CD4-positive, alpha-beta T cell (primary cell): ENCODE measurements at regions of chr2 and their contacts with region 1.

Region 1: GRCh38 chr2:134918526-134919340 is at the start of gene CCNT2:
- DNase-seq: peak; percentile 98 to 100 (median 99)
- ATAC-seq: peak; percentile 82
- H3K4me3 ChIP-seq: peak within 1 kb of the TSS; percentile 88
- H3K4me3 Mint-ChIP-seq: peak within 1 kb of the TSS; percentile 92
- H3K27ac ChIP-seq: peak within 1 kb of the TSS; percentile 95 to 96
- H3K27ac Mint-ChIP-seq: peak within 1 kb of the TSS; percentile 92
- H3K4me1 ChIP-seq: peaks cover 25% of the 10 kb centered on the region
- H3K4me1 Mint-ChIP-seq: peaks cover 57% of the 10 kb centered on the region
- H3K27me3 ChIP-seq: no peaks in the 10 kb centered on the region
- H3K27me3 Mint-ChIP-seq: no peaks in the 10 kb centered on the region
- CTCF ChIP-seq: no peak
- total RNA-seq, gene CCNT2: 62.1 to 67.5 TPM

Region 2: GRCh38 chr2:135876066-135876711 is 957.5 kb after region 1 on chr2 and contains the start of gene MCM6:
- CTCF ChIA-PET with region 1: no interaction called
- POLR2A ChIA-PET with region 1: interaction called, 4 read pairs
- intact Hi-C with region 1: loop called in 1 of 2 experiments (anchors 2 kb)
- DNase-seq: peak; percentile 94 to 100 (median 96)
- ATAC-seq: peak; percentile 89
- H3K4me3 ChIP-seq: peak within 1 kb of the TSS; percentile 94
- H3K4me3 Mint-ChIP-seq: peak within 1 kb of the TSS; percentile 97
- H3K27ac ChIP-seq: peak within 1 kb of the TSS; percentile 76 to 83
- H3K27ac Mint-ChIP-seq: peak within 1 kb of the TSS; percentile 99
- H3K4me1 ChIP-seq: peaks cover 19% of the 10 kb centered on the region
- H3K4me1 Mint-ChIP-seq: peaks cover 48% of the 10 kb centered on the region
- H3K27me3 ChIP-seq: no peaks in the 10 kb centered on the region
- H3K27me3 Mint-ChIP-seq: no peaks in the 10 kb centered on the region
- CTCF ChIP-seq: no peak
- total RNA-seq, gene MCM6: 31.5 to 34.4 TPM